IMR-90 (cell line): ENCODE measurements at regions of chr6 and their contacts with region 1.

Region 1: GRCh38 chr6:111478749-111479148 is 4.3 kb downstream of the REV3L start:
- DNase-seq: peak; percentile 72
- ATAC-seq: no peak
- H3K4me3 ChIP-seq: no peak overlapping the region
- H3K27ac ChIP-seq: no peak overlapping the region
- H3K4me1 ChIP-seq: peaks cover 8% of the 10 kb centered on the region
- H3K27me3 ChIP-seq: no peaks in the 10 kb centered on the region
- CTCF ChIP-seq: peak; percentile 59
- POLR2A ChIP-seq: no peak
- RAD21 ChIP-seq: peak; percentile 62

Region 2: DNA sequence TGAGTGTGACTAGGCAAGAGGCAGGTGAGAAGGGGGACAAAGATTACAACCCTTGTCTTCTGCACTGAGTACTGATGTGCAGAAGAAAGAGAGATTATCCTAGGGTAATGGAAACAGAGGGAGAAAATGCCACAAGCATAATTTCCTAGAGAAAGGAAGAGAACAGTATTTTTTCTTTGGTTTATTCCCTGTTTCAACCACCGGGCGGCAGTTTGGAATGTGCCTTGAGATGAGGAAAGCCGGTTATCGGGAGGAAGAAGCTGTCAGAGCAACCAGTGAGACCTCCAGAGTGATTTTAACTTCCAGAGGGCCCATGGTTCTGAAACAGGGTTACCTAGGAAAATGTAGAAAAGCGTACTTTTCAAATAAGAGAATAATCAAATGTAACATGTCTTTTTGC is 117.1 kb before region 1 on chr6:
- CTCF ChIA-PET with region 1: interaction called, 5 read pairs
- POLR2A ChIA-PET with region 1: no interaction called
- dilution Hi-C with region 1: no loop called
- in situ Hi-C with region 1: no loop called
- intact Hi-C with region 1: loop called (anchors 2 kb)
- DNase-seq: peak; percentile 43
- ATAC-seq: peak; percentile 73
- H3K4me3 ChIP-seq: no peak overlapping the region
- H3K27ac ChIP-seq: no peak overlapping the region
- H3K4me1 ChIP-seq: peaks cover 4% of the 10 kb centered on the region
- H3K27me3 ChIP-seq: no peaks in the 10 kb centered on the region
- CTCF ChIP-seq: peak; percentile 52
- POLR2A ChIP-seq: no peak
- RAD21 ChIP-seq: peak; percentile 65

Region 3: GRCh38 chr6:111417181-111417585 is 61.6 kb before region 1 on chr6:
- CTCF ChIA-PET with region 1: interaction called, 5 read pairs
- POLR2A ChIA-PET with region 1: no interaction called
- dilution Hi-C with region 1: no loop called
- in situ Hi-C with region 1: no loop called
- intact Hi-C with region 1: loop called (anchors 5 kb)
- DNase-seq: peak; percentile 17
- ATAC-seq: peak; percentile 68
- H3K4me3 ChIP-seq: no peak overlapping the region
- H3K27ac ChIP-seq: 0 out of 2 replicates have a peak overlapping the region, but pooled peaks have one; percentile 4
- H3K4me1 ChIP-seq: peaks cover 6% of the 10 kb centered on the region
- H3K27me3 ChIP-seq: no peaks in the 10 kb centered on the region
- CTCF ChIP-seq: no peak
- POLR2A ChIP-seq: no peak
- RAD21 ChIP-seq: no peak

Region 4: GRCh38 chr6:111591104-111591900 is 112.6 kb after region 1 on chr6:
- CTCF ChIA-PET with region 1: no interaction called
- POLR2A ChIA-PET with region 1: no interaction called
- dilution Hi-C with region 1: no loop called
- in situ Hi-C with region 1: no loop called
- intact Hi-C with region 1: loop called (anchors 1 kb)
- DNase-seq: peak; percentile 100
- ATAC-seq: peak; percentile 89
- H3K4me3 ChIP-seq: no peak overlapping the region
- H3K27ac ChIP-seq: peak overlapping the region; percentile 93
- H3K4me1 ChIP-seq: peaks cover 29% of the 10 kb centered on the region
- H3K27me3 ChIP-seq: no peaks in the 10 kb centered on the region
- CTCF ChIP-seq: no peak
- POLR2A ChIP-seq: peak; percentile 62; the same call in 1 of the 2 replicates
- RAD21 ChIP-seq: peak; percentile 25